ENCODE measurements at regions of chr18 and their contacts with region 1.

Region 1: DNA sequence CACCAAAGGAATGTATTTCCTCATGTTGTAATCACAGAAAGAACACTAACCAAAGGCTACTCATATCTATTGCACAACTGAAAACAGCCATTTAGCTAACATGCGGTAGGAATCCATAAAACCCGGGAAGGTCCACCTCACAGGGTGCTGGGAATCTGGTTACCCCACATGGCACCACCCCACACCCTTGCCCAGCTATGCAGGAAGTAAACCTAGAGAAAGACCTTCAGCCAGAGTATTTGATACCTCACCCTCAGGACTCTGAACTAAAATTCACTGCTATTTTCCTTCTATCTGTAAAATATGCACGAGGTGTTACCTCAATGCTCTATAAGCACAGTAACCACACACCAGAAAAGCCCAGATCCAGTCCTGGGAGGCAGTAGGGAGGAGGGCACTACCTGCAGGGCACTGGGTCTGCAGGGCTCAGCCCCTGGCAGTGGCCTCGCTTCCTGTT is 45.8 kb downstream of the PTPN2 start:
- DNase-seq: peak; percentile 71 to 90
- ATAC-seq: peak; percentile 97

Region 2: DNA sequence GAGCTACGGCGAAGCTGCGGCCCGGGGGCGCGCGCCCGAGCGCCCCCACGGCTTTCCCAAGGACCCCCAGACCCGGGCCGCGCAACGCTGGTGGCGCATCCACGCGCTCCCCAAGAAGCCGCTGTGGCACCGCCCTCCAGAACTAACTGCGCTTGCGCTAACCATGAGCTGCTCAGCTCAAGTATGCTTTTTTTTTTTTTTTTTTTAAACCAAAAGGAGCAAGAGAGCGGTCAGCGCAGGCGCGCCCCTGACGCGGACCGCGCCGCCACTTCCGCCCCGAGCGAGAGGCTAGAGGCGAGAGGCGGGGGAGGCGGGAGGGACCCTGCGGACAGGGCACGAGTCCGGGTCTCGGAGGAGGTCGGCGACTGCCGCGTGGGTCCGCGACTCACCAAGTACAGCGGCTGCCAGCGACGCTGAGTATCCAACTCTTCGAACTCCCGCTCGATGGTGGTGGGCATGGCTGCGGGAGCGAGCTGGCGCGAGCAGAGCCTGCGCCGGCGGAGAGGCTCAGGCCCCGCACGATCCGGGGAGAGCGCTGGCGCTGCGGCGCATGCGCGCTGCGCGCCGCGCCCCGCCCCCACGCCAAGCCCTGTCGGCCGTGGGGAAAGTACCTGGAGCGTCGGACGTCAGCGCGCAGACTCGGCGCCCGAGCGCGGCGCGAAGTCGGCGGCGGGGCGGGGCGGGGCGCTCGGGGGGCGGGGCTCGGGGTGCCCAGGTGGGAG is 45.6 kb after region 1 on chr18 and contains the start of gene PTPN2:
- intact Hi-C with region 1: loop called in 1 of 2 experiments (anchors 10 kb)
- DNase-seq: peak; percentile 94 to 96
- ATAC-seq: peak; percentile 92
- total RNA-seq, gene PTPN2: 34.0 to 35.4 TPM

Region 3: DNA sequence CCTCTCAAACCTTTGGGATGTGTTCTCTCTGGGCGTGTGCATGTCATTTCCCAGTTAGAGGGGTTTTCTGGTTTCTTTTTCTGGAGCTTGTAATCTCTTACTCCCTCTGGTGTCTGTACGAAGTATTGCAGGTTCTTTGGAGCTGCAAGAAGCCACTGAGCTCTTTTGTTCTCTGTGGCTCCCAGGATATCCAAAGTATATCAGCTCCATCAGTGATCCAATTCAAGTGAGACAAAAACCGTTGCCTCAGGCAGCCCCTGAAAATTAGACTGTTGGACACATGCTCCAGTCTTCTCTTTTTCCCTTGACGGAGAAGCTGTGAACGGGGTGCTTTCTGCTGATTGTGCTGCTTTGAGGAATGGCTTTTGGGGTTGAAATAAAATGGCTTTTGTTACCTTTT is 321.4 kb after region 1 on chr18:
- intact Hi-C with region 1: no loop called
- DNase-seq: no peak
- ATAC-seq: peak; percentile 64